ENCODE measurements at regions of chr2 and their contacts with region 1.

Region 1: DNA sequence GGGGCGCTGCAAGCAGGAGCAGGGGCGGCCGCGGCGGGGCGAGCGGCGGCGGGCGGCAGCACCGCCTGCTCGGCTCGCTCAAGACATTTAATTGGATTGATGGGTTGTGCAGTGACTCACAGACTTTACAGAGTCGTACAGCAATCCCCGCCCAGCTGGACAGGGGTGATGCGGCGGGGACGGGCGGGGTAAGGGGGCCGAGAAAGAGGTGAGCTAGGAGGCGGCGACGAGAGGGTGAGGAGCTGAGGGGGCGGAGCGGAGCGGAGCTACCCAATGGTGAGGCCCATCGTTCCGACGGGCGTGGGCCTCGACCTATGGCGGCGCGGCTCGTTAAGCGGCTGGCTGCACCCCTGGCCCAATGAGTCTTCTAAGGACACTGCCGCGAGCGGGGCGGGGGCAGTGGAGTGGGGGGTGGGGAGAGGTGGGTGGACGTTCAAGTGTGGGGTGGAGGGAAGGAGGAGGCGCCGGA is 97.1 kb upstream of the SERTAD2 start:
- DNase-seq: peak; percentile 99
- ATAC-seq: peak; percentile 90
- H3K4me3 Mint-ChIP-seq: peak overlapping the region; percentile 92
- H3K27ac Mint-ChIP-seq: peak overlapping the region; percentile 92
- H3K4me1 Mint-ChIP-seq: peaks cover 24% of the 10 kb centered on the region
- H3K27me3 Mint-ChIP-seq: no peaks in the 10 kb centered on the region

Region 2: DNA sequence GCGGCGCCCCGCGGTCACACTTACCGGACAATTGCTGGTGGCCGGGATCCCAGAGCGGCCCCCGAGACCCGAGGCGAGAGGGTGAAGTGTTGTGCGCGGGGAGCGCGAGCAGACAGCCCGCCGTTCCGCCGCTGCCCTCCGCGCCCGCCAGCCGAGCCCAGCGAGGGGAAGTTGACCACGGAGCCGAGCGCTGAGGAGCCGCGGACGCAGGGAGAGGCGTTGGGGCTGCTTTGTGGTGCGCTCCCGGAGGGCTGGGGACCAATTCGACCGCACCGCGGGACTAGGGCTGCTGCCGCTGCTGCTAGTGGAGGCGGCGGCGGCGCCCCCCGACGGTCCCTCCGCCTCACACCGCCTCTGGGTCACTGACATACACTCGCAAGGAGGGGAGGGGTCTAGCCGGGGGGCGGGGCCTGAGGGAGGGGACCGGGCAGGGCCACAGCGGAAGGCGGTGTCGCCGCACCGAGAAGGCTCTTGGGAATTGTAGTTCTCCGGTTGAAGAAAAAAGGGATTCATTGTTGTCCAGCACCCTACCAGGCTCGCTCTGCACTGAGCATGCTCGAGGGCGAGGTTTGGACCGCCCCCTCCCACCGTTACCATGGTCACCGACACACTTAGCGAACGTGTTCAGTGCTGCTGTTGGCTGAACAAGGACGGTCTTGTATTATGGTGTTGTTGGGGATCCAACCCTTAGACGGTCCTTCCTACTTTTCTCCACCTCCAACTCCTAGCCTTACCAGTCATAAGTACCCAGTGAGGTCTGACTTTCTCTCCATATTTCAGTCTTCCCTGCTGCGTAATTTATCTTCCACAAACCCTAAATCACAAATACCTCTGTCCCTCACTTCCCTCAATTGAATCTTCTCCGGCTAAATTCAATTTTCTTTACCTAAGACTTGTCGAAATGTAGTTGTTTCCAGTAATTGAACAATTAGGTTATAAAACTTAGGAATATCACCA is 606.5 kb before region 1 on chr2 and contains the start of gene PELI1:
- CTCF ChIA-PET with region 1: no interaction called
- POLR2A ChIA-PET with region 1: no interaction called
- intact Hi-C with region 1: loop called in 1 of 2 experiments (anchors 1 kb)
- DNase-seq: peak; percentile 97
- ATAC-seq: peak; percentile 89
- H3K4me3 Mint-ChIP-seq: peak within 1 kb of the TSS; percentile 84
- H3K27ac Mint-ChIP-seq: peak within 1 kb of the TSS; percentile 97
- H3K4me1 Mint-ChIP-seq: peaks cover 30% of the 10 kb centered on the region
- H3K27me3 Mint-ChIP-seq: no peaks in the 10 kb centered on the region
- total RNA-seq, gene PELI1: 21.3 to 29.7 TPM

Region 3: GRCh38 chr2:64586883-64587481 is 163.9 kb before region 1 on chr2:
- CTCF ChIA-PET with region 1: no interaction called
- POLR2A ChIA-PET with region 1: no interaction called
- intact Hi-C with region 1: no loop called
- DNase-seq: no peak
- ATAC-seq: peak; percentile 44
- H3K4me3 Mint-ChIP-seq: no peak overlapping the region
- H3K27ac Mint-ChIP-seq: no peak overlapping the region
- H3K4me1 Mint-ChIP-seq: peaks cover 20% of the 10 kb centered on the region
- H3K27me3 Mint-ChIP-seq: no peaks in the 10 kb centered on the region

Region 4: DNA sequence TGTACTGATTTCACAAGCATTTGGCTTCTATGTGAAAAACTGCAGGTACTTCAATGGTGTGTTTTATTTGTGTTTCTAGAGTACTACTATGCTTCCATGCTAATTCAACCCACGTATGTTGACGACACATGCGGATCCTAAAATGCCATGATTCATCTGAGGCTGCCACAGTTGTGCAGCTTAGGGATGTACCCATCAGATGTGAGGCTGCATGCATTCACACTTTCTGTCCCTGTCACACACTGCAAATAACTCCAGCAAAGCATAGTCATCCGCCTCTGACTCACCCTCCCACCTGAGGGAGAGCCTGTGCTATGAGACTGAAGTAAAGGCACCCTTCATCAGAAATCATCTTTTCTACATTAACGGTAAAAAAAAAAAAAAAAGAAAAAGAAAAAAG is 75.0 kb before region 1 on chr2:
- CTCF ChIA-PET with region 1: no interaction called
- POLR2A ChIA-PET with region 1: interaction called, 3 read pairs
- intact Hi-C with region 1: loop called in 1 of 2 experiments (anchors 1 kb)
- DNase-seq: peak; percentile 90
- ATAC-seq: peak; percentile 100
- H3K4me3 Mint-ChIP-seq: no peak overlapping the region
- H3K27ac Mint-ChIP-seq: peak overlapping the region; percentile 62
- H3K4me1 Mint-ChIP-seq: peaks cover 44% of the 10 kb centered on the region
- H3K27me3 Mint-ChIP-seq: no peaks in the 10 kb centered on the region

Region 5: GRCh38 chr2:64767670-64768468 is 17.0 kb after region 1 on chr2:
- CTCF ChIA-PET with region 1: interaction called, 11 read pairs
- POLR2A ChIA-PET with region 1: no interaction called
- intact Hi-C with region 1: loop called (anchors 1 kb)
- DNase-seq: peak; percentile 86
- ATAC-seq: peak; percentile 84
- H3K4me3 Mint-ChIP-seq: peak overlapping the region; percentile 71
- H3K27ac Mint-ChIP-seq: peak overlapping the region; percentile 80
- H3K4me1 Mint-ChIP-seq: peaks cover 25% of the 10 kb centered on the region
- H3K27me3 Mint-ChIP-seq: peaks cover 2% of the 10 kb centered on the region

Region 6: DNA sequence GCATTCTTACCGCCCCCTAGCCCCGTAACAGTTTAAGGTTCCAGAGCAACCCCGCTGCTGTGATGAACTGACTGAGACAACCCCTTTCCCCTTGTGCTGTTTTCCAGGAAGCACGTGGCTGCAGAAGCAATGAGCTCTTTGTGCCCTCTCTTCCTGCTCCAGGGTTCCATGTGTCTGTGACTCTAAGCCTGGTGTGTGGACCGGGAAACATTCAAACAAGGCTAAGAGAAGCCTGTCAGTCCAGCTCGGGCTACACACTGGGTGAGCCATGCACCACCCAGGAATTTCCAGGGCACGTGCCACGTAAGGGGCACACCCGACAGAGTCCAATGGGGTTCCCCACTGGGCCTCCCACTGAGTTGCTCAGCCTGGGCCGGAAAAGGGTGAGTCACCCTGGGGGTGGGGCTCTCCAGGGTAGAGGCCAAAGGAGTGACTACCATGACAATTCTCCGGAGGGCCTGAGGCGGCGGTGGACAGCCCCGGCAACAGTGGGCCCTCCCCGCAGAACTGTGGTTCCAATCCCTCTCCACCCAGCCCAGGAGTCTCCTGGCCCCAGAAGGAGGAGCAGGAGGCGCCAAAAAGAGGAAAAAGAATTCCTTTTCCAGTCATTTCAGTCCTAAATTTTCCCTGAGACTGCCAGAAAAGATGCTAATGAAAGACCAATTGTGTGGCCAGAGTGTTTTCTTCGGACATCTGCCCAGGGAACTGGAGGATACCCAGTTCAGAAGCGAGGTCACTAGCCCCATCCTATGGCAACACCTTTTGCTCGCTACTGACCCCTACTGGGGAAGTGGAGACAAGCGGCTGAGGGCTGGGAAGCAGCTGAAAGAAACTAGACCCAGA is 80.5 kb after region 1 on chr2:
- CTCF ChIA-PET with region 1: interaction called, 10 read pairs
- POLR2A ChIA-PET with region 1: no interaction called
- intact Hi-C with region 1: loop called (anchors 1 to 2 kb)
- DNase-seq: peak; percentile 92
- ATAC-seq: peak; percentile 96
- H3K4me3 Mint-ChIP-seq: peak overlapping the region; percentile 34
- H3K27ac Mint-ChIP-seq: peak overlapping the region; percentile 86
- H3K4me1 Mint-ChIP-seq: peaks cover 16% of the 10 kb centered on the region
- H3K27me3 Mint-ChIP-seq: no peaks in the 10 kb centered on the region

Region 7: DNA sequence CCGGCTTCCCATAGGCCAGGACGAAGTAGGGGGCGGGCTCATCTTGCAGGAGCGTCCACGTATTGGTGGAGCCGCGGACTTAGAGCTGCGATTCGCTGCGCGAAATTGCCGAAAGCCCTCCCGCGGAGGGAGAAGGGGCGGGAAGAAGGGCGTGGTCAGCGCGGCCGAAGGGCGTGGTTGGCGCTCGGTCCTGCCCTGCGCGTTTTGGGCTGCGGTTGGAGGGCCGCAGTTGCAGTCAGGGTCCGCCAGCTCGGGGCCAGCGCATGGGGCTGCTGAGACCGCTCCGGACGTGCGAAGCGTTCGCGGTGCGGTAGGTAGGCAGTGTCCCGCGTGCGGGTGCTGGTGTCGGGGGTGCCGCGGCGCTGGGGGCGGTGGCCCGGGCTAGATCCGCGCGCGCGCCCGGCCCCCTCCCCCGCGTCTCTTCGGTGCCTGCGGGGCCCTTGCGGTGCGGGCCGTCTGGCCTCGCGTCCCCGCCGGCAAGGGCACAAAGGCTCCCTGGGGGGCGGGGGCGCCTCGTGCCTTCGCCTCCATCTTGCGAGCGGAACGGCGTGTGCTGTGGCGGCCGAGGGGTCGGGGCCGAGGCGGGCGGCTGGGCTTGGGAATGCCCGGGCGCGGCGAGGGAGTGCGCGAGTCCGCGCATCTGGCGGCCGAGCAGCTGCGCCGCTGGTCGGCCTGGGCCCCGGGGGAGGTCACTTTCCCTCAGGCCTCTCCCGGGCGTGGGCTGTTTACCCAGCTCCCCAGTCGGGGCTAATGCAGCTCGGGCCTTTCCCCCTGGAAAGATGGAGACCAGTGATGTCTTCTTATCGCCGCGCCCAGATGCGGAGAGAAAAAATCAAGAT is 305.6 kb after region 1 on chr2 and contains the start of gene CEP68:
- CTCF ChIA-PET with region 1: no interaction called
- POLR2A ChIA-PET with region 1: no interaction called
- intact Hi-C with region 1: loop called in 1 of 2 experiments (anchors 1 kb)
- DNase-seq: peak; percentile 98
- ATAC-seq: peak; percentile 94
- H3K4me3 Mint-ChIP-seq: peak within 1 kb of the TSS; percentile 93
- H3K27ac Mint-ChIP-seq: peak within 1 kb of the TSS; percentile 84
- H3K4me1 Mint-ChIP-seq: peaks cover 55% of the 10 kb centered on the region
- H3K27me3 Mint-ChIP-seq: no peaks in the 10 kb centered on the region
- total RNA-seq, gene CEP68: 4.9 to 6.0 TPM

Measured in activated CD4-positive, alpha-beta T cell treated with anti-CD3 and anti-CD28 coated beads for 36 hours (primary cell).